CD4-positive, alpha-beta T cell (primary cell): ENCODE measurements at regions of chr16 and their contacts with region 1.

Region 1: DNA sequence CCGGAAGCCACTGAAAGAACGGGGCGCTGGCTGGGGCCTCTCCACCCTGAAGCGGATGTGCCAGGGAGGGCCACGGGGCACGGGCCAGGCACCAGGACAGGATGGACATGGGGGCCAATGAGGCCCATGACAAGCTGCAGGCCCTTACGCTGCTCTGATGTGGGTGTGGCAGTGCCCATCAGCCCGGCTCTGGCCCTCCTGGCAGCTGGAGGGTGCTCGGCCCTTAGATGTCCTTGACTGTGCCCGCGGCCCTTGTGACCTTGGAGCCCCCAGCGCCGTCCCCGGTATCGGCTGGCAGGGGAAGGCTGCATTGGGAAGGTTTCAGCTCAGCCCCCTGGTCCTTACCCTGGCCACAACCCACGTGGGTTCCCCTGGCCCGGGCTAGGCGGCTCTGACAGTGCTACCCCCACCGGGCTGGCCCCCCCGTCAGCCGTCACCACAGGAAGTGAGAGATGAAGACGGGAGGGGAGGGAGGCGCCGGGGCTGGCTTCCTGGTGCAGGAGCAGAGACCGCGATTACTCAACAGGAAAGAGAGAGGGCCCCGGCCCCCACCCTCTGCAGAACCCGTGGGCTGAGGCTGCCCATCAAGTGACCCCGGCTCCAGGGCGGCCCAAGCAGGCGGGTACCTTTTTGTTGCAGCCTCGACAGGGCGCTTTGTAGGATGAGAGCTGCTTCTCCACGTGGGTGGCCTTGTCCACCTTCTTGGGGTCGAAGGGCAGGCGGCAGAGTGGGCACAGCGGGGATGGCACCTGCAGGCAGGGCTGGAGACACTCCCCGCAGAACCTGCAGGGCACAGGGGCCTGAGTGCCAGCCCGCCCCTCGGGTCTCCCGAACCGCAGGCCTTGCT is 5.3 kb downstream of the RNF166 start:
- DNase-seq: peak; percentile 89 to 98 (median 96)
- ATAC-seq: peak; percentile 73
- H3K4me3 ChIP-seq: peak overlapping the region; percentile 82
- H3K4me3 Mint-ChIP-seq: peak overlapping the region; percentile 99
- H3K27ac ChIP-seq: peak overlapping the region; percentile 93 to 96
- H3K27ac Mint-ChIP-seq: peak overlapping the region; percentile 100
- H3K4me1 ChIP-seq: peaks cover 94% of the 10 kb centered on the region
- H3K4me1 Mint-ChIP-seq: peaks cover 70% of the 10 kb centered on the region
- H3K27me3 ChIP-seq: no peaks in the 10 kb centered on the region
- H3K27me3 Mint-ChIP-seq: no peaks in the 10 kb centered on the region
- CTCF ChIP-seq: no peak

Region 2: GRCh38 chr16:88569985-88570690 is 130.7 kb before region 1 on chr16 and contains the start of gene ZC3H18:
- CTCF ChIA-PET with region 1: no interaction called
- POLR2A ChIA-PET with region 1: interaction called, 38 read pairs
- intact Hi-C with region 1: loop called (anchors 1 to 10 kb)
- DNase-seq: peak; percentile 93 to 100 (median 98)
- ATAC-seq: peak; percentile 93
- H3K4me3 ChIP-seq: peak within 1 kb of the TSS; percentile 65
- H3K4me3 Mint-ChIP-seq: peak within 1 kb of the TSS; percentile 88
- H3K27ac ChIP-seq: peak within 1 kb of the TSS; percentile 75 to 78
- H3K27ac Mint-ChIP-seq: peak within 1 kb of the TSS; percentile 87
- H3K4me1 ChIP-seq: peaks cover 31% of the 10 kb centered on the region
- H3K4me1 Mint-ChIP-seq: peaks cover 33% of the 10 kb centered on the region
- H3K27me3 ChIP-seq: no peaks in the 10 kb centered on the region
- H3K27me3 Mint-ChIP-seq: no peaks in the 10 kb centered on the region
- CTCF ChIP-seq: no peak
- total RNA-seq, gene ZC3H18: 92.6 to 93.7 TPM

Region 3: GRCh38 chr16:88633684-88634140 is 67.1 kb before region 1 on chr16:
- CTCF ChIA-PET with region 1: no interaction called
- POLR2A ChIA-PET with region 1: interaction called, 24 read pairs
- intact Hi-C with region 1: loop called in 1 of 2 experiments (anchors 5 kb)
- DNase-seq: peak in 11 of 14 experiments; percentile 23 to 81 (median 45)
- ATAC-seq: peak; percentile 57
- H3K4me3 ChIP-seq: peak overlapping the region; percentile 63
- H3K4me3 Mint-ChIP-seq: peak overlapping the region; percentile 80
- H3K27ac ChIP-seq: peak overlapping the region; percentile 27 to 49
- H3K27ac Mint-ChIP-seq: peak overlapping the region; percentile 58
- H3K4me1 ChIP-seq: peaks cover 57% of the 10 kb centered on the region
- H3K4me1 Mint-ChIP-seq: peaks cover 28% of the 10 kb centered on the region
- H3K27me3 ChIP-seq: peaks cover under 1 to 7% of the 10 kb centered on the region in 2 experiments
- H3K27me3 Mint-ChIP-seq: peaks cover 17% of the 10 kb centered on the region
- CTCF ChIP-seq: no peak

Region 4: DNA sequence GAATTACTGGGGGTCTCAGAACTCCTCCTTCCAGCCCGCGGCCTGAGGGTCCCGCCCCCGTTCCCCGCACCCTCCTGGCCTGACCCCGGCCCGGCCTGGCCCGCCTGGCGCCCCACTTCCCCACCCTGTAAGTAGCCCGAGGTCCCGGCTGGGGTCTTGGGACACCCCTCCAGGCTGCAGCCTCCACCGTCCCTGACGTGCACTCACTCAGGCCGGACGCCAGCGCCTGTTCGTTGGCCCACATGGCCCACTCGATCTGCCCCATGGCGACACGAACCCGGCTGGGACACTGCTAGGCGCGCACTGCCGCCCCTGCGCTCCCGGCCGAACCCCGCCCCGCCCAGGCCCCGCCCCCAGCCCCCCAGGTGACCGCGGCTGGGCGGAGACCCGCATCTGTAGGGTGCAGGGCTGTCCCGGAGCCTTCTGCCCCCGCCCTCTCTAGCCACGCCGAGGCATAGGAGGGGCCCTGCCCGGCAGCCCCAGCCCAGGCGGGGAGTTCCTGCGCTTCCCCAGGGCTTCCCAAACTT is 50.0 kb before region 1 on chr16 and contains the start of gene CYBA:
- CTCF ChIA-PET with region 1: no interaction called
- POLR2A ChIA-PET with region 1: interaction called, 3 read pairs
- intact Hi-C with region 1: loop called in 1 of 2 experiments (anchors 2 kb)
- DNase-seq: peak; percentile 64 to 91 (median 76)
- ATAC-seq: peak; percentile 76
- H3K4me3 ChIP-seq: peak within 1 kb of the TSS; percentile 96
- H3K4me3 Mint-ChIP-seq: peak within 1 kb of the TSS; percentile 93
- H3K27ac ChIP-seq: peak within 1 kb of the TSS; percentile 81 to 94
- H3K27ac Mint-ChIP-seq: peak within 1 kb of the TSS; percentile 95
- H3K4me1 ChIP-seq: peaks cover 56% of the 10 kb centered on the region
- H3K4me1 Mint-ChIP-seq: peaks cover 14% of the 10 kb centered on the region
- H3K27me3 ChIP-seq: no peaks in the 10 kb centered on the region
- H3K27me3 Mint-ChIP-seq: no peaks in the 10 kb centered on the region
- CTCF ChIP-seq: no peak
- total RNA-seq, gene CYBA: 292 to 294 TPM

Region 5: GRCh38 chr16:88686439-88687253 is 14.2 kb before region 1 on chr16 and contains the start of gene SNAI3:
- CTCF ChIA-PET with region 1: interaction called, 23 read pairs
- POLR2A ChIA-PET with region 1: interaction called, 71 read pairs
- intact Hi-C with region 1: loop called (anchors 1 kb)
- DNase-seq: peak; percentile 63 to 90 (median 80)
- ATAC-seq: peak; percentile 78
- H3K4me3 ChIP-seq: peak within 1 kb of the TSS; percentile 77
- H3K4me3 Mint-ChIP-seq: peak within 1 kb of the TSS; percentile 87
- H3K27ac ChIP-seq: peak within 1 kb of the TSS; percentile 29 to 56
- H3K27ac Mint-ChIP-seq: peak within 1 kb of the TSS; percentile 80
- H3K4me1 ChIP-seq: peaks cover 80% of the 10 kb centered on the region
- H3K4me1 Mint-ChIP-seq: peaks cover 58% of the 10 kb centered on the region
- H3K27me3 ChIP-seq: no peaks in the 10 kb centered on the region
- H3K27me3 Mint-ChIP-seq: no peaks in the 10 kb centered on the region
- CTCF ChIP-seq: no peak
- total RNA-seq, gene SNAI3: 3.0 to 3.5 TPM